PC-9 (cell line): ENCODE measurements at regions of chr6 and their contacts with region 1.

Region 1: GRCh38 chr6:47057830-47058540 is 15.9 kb upstream of the ADGRF1 start:
- DNase-seq: peak in 1 of 2 experiments; percentile 87
- H3K4me3 ChIP-seq: peak overlapping the region; percentile 9
- H3K27ac ChIP-seq: peak overlapping the region; percentile 88
- H3K4me1 ChIP-seq: peaks cover 58% of the 10 kb centered on the region
- H3K27me3 ChIP-seq: no peaks in the 10 kb centered on the region
- CTCF ChIP-seq: no peak

Region 2: DNA sequence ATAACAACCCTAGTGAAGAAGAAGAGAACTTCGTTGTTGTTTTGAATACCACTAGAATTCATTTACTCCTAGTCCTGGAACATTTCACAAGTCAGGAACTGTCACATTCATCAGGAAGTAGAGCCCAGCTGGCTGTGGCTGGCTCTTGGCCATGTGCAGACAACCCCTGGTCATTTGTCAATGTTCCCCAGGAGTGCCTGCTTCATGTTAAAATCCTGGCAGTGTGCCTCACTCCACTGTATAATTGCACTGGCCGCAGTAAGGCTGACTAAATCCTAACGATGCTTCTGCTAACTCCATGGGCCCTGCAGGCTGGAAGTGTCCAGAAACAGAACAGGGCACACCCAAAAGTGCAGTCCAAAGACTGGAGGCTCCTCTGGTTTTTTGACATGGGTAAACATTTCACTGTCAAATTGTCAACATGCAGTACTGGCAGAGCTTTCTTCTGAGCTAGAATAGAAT is 25.6 kb after region 1 on chr6:
- CTCF ChIA-PET with region 1: no interaction called
- POLR2A ChIA-PET with region 1: no interaction called
- intact Hi-C with region 1: loop called (anchors 1 kb)
- DNase-seq: peak; percentile 53 to 81
- H3K4me3 ChIP-seq: no peak overlapping the region
- H3K27ac ChIP-seq: no peak overlapping the region
- H3K4me1 ChIP-seq: peaks cover 21% of the 10 kb centered on the region
- H3K27me3 ChIP-seq: no peaks in the 10 kb centered on the region
- CTCF ChIP-seq: no peak

Region 3: DNA sequence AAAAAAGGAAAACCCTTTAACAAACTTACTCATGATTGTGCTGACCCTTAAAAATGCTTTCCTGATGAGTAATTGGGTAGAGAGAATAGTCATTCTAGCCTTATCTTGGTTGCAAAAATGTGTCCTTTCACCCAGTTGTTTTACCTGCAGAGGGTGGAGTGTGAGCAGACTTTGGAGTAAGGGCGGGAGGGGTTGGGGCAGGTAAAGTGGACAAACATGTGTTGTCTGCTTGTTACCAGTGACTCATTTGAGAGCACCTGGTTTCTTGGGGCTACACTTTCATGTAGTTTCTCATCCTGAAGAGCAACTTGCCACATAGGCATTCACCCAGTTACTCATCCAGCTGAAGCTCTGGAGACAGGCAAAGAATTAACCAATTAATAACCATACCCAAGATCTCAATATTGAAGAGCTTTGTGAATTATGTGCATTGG is 130.6 kb after region 1 on chr6:
- CTCF ChIA-PET with region 1: no interaction called
- POLR2A ChIA-PET with region 1: interaction called, 3 read pairs
- intact Hi-C with region 1: loop called (anchors 1 kb)
- DNase-seq: peak; percentile 71 to 99
- H3K4me3 ChIP-seq: 0 out of 2 replicates have a peak overlapping the region, but pooled peaks have one; percentile 2
- H3K27ac ChIP-seq: peak overlapping the region; percentile 93
- H3K4me1 ChIP-seq: peaks cover 56% of the 10 kb centered on the region
- H3K27me3 ChIP-seq: no peaks in the 10 kb centered on the region
- CTCF ChIP-seq: no peak